ENCODE measurements at regions of chr12 and their contacts with region 1.

Region 1: DNA sequence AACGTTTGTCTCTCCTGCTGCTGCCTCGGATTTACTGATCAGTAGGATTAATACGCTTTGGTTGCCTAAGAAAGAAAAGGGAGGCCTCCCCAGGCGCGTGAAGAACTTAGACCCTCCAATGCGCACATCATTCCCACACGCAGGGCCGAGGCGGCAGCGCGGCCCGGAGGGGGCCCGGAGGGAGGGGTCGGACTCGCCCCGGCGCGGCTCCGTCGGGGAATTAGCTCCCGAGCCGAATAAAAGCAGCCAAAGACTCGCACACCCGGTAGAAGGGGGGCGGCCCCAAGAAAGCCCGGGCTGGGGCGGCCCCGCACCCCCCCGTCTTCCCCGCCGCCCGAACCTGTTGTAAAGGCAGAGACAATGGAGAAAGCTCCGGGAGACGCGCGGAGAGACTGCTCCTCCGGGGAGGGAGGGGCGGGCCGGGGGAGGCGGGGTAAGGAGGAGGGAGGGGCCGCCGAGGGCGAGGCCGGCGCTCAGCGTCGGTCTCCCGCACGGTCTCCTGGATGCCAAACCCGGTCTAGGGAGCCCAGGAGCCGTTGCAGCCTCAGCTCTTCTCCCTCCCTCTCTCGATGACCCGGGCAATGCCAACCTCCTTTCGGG is at the start of gene NELL2:
- DNase-seq: peak; percentile 81
- ATAC-seq: peak; percentile 83
- H3K4me3 Mint-ChIP-seq: peak within 1 kb of the TSS; percentile 98
- H3K27ac Mint-ChIP-seq: peak within 1 kb of the TSS; percentile 96
- H3K4me1 Mint-ChIP-seq: peaks cover 18% of the 10 kb centered on the region
- H3K27me3 Mint-ChIP-seq: no peaks in the 10 kb centered on the region
- CTCF ChIP-seq: no peak
- total RNA-seq, gene NELL2: 99.7 to 106 TPM

Region 2: GRCh38 chr12:44780221-44780790 is 95.7 kb before region 1 on chr12:
- CTCF ChIA-PET with region 1: interaction called, 76 read pairs
- POLR2A ChIA-PET with region 1: interaction called, 4 read pairs
- intact Hi-C with region 1: loop called (anchors 5 kb)
- DNase-seq: no peak
- ATAC-seq: no peak
- H3K4me3 Mint-ChIP-seq: no peak overlapping the region
- H3K27ac Mint-ChIP-seq: peak overlapping the region; percentile 22
- H3K4me1 Mint-ChIP-seq: peaks cover 36% of the 10 kb centered on the region
- H3K27me3 Mint-ChIP-seq: no peaks in the 10 kb centered on the region
- CTCF ChIP-seq: no peak

Region 3: DNA sequence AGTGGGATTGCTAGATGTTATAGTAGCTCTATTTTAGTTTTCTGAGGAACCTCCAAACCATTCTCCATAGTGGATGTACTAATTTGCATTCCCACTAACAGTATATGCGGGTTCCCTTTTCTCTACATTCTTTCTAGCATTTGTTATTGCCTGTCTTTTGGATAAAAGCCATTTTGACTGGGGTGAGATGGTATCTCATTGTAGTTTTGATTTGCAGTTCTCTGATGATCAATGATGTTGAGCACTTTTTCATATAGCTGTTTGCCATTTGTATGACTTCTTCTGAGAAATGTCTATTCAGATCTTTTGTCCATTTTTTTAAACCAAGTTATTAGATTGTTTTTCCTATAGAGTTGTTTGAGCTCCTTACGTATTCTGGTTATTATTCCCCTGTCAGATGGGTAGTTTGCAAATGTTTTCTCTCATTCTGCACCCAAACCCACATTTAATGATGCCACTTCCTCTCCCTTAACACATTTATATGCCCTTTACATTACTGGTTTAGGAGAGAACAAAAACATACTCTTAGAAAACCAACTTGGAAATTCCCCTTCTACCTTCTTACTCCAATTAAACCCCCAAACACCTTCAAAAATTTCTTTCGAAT is 48.1 kb before region 1 on chr12:
- CTCF ChIA-PET with region 1: interaction called, 14 read pairs
- POLR2A ChIA-PET with region 1: interaction called, 8 read pairs
- intact Hi-C with region 1: no loop called
- DNase-seq: no peak
- ATAC-seq: peak; percentile 85
- H3K4me3 Mint-ChIP-seq: peak overlapping the region; percentile 71
- H3K27ac Mint-ChIP-seq: peak overlapping the region; percentile 91
- H3K4me1 Mint-ChIP-seq: peaks cover 73% of the 10 kb centered on the region
- H3K27me3 Mint-ChIP-seq: no peaks in the 10 kb centered on the region
- CTCF ChIP-seq: no peak

Region 4: GRCh38 chr12:44842669-44843068 is 33.4 kb before region 1 on chr12:
- CTCF ChIA-PET with region 1: interaction called, 18 read pairs
- POLR2A ChIA-PET with region 1: interaction called, 31 read pairs
- intact Hi-C with region 1: loop called (anchors 5 kb)
- DNase-seq: peak; percentile 48
- ATAC-seq: peak; percentile 61
- H3K4me3 Mint-ChIP-seq: peak overlapping the region; percentile 74
- H3K27ac Mint-ChIP-seq: peak overlapping the region; percentile 92
- H3K4me1 Mint-ChIP-seq: peaks cover 72% of the 10 kb centered on the region
- H3K27me3 Mint-ChIP-seq: no peaks in the 10 kb centered on the region
- CTCF ChIP-seq: no peak

Region 5: GRCh38 chr12:44858226-44858855 is 17.7 kb before region 1 on chr12:
- CTCF ChIA-PET with region 1: interaction called, 35 read pairs
- POLR2A ChIA-PET with region 1: interaction called, 12 read pairs
- intact Hi-C with region 1: no loop called
- DNase-seq: no peak
- ATAC-seq: no peak
- H3K4me3 Mint-ChIP-seq: no peak overlapping the region
- H3K27ac Mint-ChIP-seq: peak overlapping the region; percentile 23
- H3K4me1 Mint-ChIP-seq: peaks cover 82% of the 10 kb centered on the region
- H3K27me3 Mint-ChIP-seq: no peaks in the 10 kb centered on the region
- CTCF ChIP-seq: no peak